CD14-positive monocyte (primary cell): ENCODE measurements at regions of chr6 and their contacts with region 1.

Region 1: GRCh38 chr6:73893696-73894095 is 197.7 kb downstream of the CD109 start:
- DNase-seq: no peak
- H3K4me3 ChIP-seq: no peak overlapping the region
- H3K4me3 Mint-ChIP-seq: no peak overlapping the region
- H3K27ac ChIP-seq: no peak overlapping the region
- H3K27ac Mint-ChIP-seq: no peak overlapping the region
- H3K4me1 ChIP-seq: no peaks in the 10 kb centered on the region
- H3K4me1 Mint-ChIP-seq: no peaks in the 10 kb centered on the region
- H3K27me3 ChIP-seq: no peaks in the 10 kb centered on the region
- H3K27me3 Mint-ChIP-seq: peaks cover 0 to 1% (median 0%) of the 10 kb centered on the region in 3 donors
- CTCF ChIP-seq: no peak

Region 2: DNA sequence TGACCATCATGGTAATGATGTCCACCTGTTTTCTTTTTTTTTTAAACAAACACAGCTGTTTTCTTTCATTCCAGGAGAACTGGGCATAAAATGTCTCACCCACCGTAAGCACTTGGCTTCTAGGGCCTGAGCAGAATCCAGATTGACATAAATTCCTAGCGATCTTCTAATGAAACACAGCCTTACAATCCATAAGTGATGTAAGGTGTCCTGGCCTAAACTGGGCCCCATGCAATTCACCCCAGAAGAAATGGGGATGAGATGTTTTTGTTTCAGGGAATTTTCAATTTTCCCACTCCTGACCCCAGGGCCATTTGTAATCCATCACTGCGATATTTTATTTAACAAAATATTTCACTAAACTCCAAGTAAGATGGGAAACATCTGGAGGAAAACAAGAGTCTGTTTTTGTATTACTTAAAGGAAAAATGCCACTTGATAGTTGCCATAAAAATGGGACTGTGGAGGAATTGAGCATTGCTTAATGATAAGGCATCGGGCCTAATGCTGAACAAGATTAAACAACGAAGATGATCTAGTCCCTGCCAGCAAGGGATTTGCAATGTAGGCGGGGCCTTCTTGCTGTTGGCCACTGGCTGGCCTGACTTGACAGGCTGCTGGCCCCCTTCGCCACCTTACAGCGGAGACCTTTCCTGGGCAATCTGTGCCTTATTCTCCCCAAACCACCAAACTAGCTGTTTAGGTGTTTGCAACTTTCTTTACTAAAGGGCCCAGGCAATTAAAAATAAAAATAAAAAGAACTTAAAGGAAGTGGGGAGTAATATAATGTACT is 14.0 kb before region 1 on chr6:
- intact Hi-C with region 1: loop called in 1 of 2 experiments (anchors 1 kb)
- DNase-seq: no peak
- H3K4me3 ChIP-seq: no peak overlapping the region
- H3K4me3 Mint-ChIP-seq: no peak overlapping the region
- H3K27ac ChIP-seq: no peak overlapping the region
- H3K27ac Mint-ChIP-seq: no peak overlapping the region
- H3K4me1 ChIP-seq: no peaks in the 10 kb centered on the region
- H3K4me1 Mint-ChIP-seq: no peaks in the 10 kb centered on the region
- H3K27me3 ChIP-seq: no peaks in the 10 kb centered on the region
- H3K27me3 Mint-ChIP-seq: peaks cover 0 to 4% (median 0%) of the 10 kb centered on the region in 3 donors
- CTCF ChIP-seq: no peak

Region 3: GRCh38 chr6:73969971-73970970 is 76.6 kb after region 1 on chr6:
- intact Hi-C with region 1: no loop called
- DNase-seq: no peak
- H3K4me3 ChIP-seq: no peak overlapping the region
- H3K4me3 Mint-ChIP-seq: no peak overlapping the region
- H3K27ac ChIP-seq: no peak overlapping the region
- H3K27ac Mint-ChIP-seq: no peak overlapping the region
- H3K4me1 ChIP-seq: no peaks in the 10 kb centered on the region
- H3K4me1 Mint-ChIP-seq: no peaks in the 10 kb centered on the region
- H3K27me3 ChIP-seq: no peaks in the 10 kb centered on the region
- H3K27me3 Mint-ChIP-seq: peaks cover 0 to 9% (median 1%) of the 10 kb centered on the region in 3 donors
- CTCF ChIP-seq: no peak

Region 4: DNA sequence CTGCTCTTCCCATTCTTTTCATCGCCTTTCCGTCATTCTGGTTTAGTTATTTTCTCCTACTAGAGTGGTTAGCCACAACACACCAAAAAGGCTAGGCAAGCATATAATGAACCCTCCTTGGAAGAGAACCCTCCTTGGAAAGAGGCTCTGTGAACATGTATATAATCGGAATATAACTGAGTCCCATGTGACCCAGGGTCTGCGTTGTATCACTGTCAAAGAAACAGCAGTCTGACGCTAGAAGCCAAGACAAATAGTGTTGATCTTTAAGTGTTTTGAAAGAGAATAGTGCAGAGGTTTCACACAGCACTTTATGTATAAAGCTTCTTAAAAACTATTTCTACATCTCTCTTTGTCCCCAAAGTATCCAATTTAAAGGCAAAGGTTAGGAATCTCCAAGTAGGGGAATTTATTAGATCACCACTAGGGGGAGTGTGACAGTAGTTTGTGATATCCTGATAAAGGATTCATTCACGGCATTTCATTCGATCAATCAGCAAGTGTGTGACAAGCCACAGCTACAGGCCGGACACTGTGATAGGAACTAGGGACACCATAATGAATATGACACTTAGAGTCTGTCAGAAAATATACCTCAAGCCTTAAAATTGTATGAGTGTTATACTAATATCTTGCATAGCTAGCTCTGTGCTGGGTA is 197.6 kb after region 1 on chr6:
- intact Hi-C with region 1: no loop called
- DNase-seq: peak in 2 of 3 donors; percentile 4 to 6
- H3K4me3 ChIP-seq: no peak overlapping the region
- H3K4me3 Mint-ChIP-seq: no peak overlapping the region
- H3K27ac ChIP-seq: no peak overlapping the region
- H3K27ac Mint-ChIP-seq: no peak overlapping the region
- H3K4me1 ChIP-seq: no peaks in the 10 kb centered on the region
- H3K4me1 Mint-ChIP-seq: no peaks in the 10 kb centered on the region
- H3K27me3 ChIP-seq: no peaks in the 10 kb centered on the region
- H3K27me3 Mint-ChIP-seq: peaks cover 1 to 6% (median 4%) of the 10 kb centered on the region in 3 donors
- CTCF ChIP-seq: peak; percentile 82